GM12878 (cell line): ENCODE measurements at regions of chr21 and their contacts with region 1.

Region 1: GRCh38 chr21:46608672-46609111 is 3.8 kb upstream of the S100B start:
- DNase-seq: peak; percentile 51
- ATAC-seq: peak; percentile 76
- H3K4me3 ChIP-seq: peak overlapping the region; percentile 62; the same call in 1 of the 2 replicates
- H3K27ac ChIP-seq: peak overlapping the region; percentile 85
- H3K4me1 ChIP-seq: peaks cover 49% of the 10 kb centered on the region
- H3K27me3 ChIP-seq: no peaks in the 10 kb centered on the region
- CTCF ChIP-seq: no peak
- EP300 ChIP-seq: peak in 1 of 2 experiments; percentile 7; a peak in 1 of 4 replicates
- POLR2A ChIP-seq: 0 out of 2 replicates have a peak, but pooled peaks have one; percentile 43
- RAD21 ChIP-seq: peak; percentile 35; the same call in 1 of the 2 replicates

Region 2: DNA sequence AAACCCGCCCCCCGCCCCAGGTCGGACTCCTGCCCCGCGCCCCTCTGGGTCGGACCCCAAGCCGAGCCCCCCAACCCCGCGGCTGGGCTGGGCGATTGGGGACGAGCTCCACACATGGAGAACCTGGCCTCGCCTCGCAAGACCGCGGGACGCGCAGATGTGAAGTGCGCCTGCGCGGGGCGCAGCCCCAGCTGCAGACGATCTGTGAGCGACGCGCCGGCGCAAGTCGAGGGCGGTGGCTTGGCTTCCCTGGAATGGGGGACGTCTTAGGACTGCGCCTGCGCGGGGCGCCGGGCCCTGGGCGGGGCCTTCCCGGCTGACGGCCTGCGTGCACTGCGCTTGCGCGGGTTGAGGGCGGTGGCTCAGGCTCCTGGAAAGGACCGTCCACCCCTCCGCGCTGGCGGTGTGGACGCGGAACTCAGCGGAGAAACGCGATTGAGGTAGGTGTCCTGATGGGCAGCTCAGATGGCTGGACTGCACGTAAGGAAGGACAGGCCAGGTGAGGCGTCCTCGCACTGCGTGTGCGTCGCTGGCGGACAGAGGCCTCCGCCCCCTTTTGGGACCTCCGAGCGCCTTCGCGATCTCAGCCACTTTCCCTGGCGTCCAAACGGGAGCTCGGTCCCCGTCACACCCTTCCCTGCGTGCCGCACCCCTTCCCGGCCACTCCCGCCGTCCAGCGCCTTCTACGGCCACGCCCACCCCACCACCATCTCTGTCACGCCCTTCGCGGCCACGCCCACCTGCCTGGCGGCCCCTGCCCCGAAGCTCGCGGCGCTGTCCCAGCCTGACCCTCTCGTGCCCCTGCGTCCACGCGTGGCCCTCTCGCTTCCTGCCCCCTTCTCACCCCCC is 26.9 kb after region 1 on chr21 and contains the start of gene PRMT2:
- CTCF ChIA-PET with region 1: no interaction called
- POLR2A ChIA-PET with region 1: interaction called, 15 read pairs
- RAD21 ChIA-PET with region 1: interaction called, 9 read pairs
- SMC1A ChIA-PET with region 1: interaction called, 17 read pairs
- in situ Hi-C with region 1: no loop called
- intact Hi-C with region 1: no loop called
- DNase-seq: peak; percentile 86
- ATAC-seq: peak; percentile 94
- H3K4me3 ChIP-seq: peak within 1 kb of the TSS; percentile 83
- H3K27ac ChIP-seq: peak within 1 kb of the TSS; percentile 85
- H3K4me1 ChIP-seq: no peaks in the 10 kb centered on the region
- H3K27me3 ChIP-seq: no peaks in the 10 kb centered on the region
- CTCF ChIP-seq: no peak
- EP300 ChIP-seq: no peak
- POLR2A ChIP-seq: peak; percentile 96
- RAD21 ChIP-seq: no peak
- polyA plus RNA-seq, gene PRMT2: 16.1 to 24.1 TPM